ENCODE measurements at regions of chr2 and their contacts with region 1.

Region 1: DNA sequence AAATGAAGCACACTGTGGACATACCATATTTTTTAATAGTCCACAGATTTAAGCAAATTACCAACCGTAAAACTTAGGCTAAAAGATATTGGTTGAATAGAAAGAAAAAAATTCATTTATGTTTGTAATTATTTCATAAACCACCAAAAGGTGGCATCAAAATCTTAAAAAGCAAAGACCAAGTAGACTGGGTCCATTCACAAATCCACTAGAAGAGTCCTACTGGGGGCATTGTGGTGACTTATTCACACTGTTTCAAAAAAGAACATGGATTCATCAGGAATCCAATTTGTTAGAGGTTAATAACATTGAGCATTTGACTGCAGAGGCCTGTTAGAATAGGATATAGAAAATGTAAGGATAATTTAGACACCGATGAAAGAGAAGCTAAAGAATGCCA is 194.9 kb upstream of the KYNU start:
- DNase-seq: peak; percentile 55

Region 2: GRCh38 chr2:142989273-142990204 is 307.0 kb after region 1 on chr2:
- in situ Hi-C with region 1: loop called (anchors 25 kb)
- DNase-seq: peak; percentile 74

Region 3: GRCh38 chr2:143334719-143335236 is 652.2 kb after region 1 on chr2:
- in situ Hi-C with region 1: no loop called
- DNase-seq: no peak

Measured in KBM-7 (cell line).